H1 (cell line): ENCODE measurements at regions of chr7 and their contacts with region 1.

Region 1: GRCh38 chr7:34584526-34584925 is 73.5 kb upstream of the NPSR1 start:
- DNase-seq: no peak
- H3K4me3 ChIP-seq: no peak overlapping the region
- H3K27ac ChIP-seq: no peak overlapping the region
- H3K4me1 ChIP-seq: no peaks in the 10 kb centered on the region
- H3K27me3 ChIP-seq: no peaks in the 10 kb centered on the region
- CTCF ChIP-seq: no peak
- EP300 ChIP-seq: no peak
- POLR2A ChIP-seq: no peak
- RAD21 ChIP-seq: no peak

Region 2: DNA sequence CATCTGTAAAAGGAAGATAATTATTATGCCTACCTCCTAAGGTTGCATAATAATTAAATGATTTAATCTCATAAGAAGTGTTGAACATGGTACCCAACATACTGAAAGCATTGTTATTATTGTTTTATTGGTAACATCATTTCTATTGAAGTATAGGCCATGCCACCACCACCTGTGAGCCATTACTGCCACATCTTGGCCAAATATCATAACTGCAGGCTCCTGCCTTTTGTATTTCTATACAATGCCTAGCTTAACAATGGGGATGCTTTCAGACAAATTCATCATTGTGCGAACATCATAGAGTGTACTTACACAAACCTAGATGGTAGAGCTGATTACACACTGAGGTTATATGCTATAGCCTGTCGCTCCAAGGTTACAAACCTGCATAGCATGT is 12.4 kb after region 1 on chr7:
- CTCF ChIA-PET with region 1: interaction called, 44 read pairs
- POLR2A ChIA-PET with region 1: no interaction called
- DNase-seq: no peak
- H3K4me3 ChIP-seq: no peak overlapping the region
- H3K27ac ChIP-seq: no peak overlapping the region
- H3K4me1 ChIP-seq: no peaks in the 10 kb centered on the region; a peak in 1 of 7 replicates
- H3K27me3 ChIP-seq: no peaks in the 10 kb centered on the region
- CTCF ChIP-seq: peak in 2 of 3 experiments; percentile 60 to 72; a peak in 3 of 4 replicates
- EP300 ChIP-seq: no peak
- POLR2A ChIP-seq: no peak
- RAD21 ChIP-seq: peak; percentile 85 to 87